Naive thymus-derived CD4-positive, alpha-beta T cell (primary cell): ENCODE measurements at regions of chr1 and their contacts with region 1.

Region 1: DNA sequence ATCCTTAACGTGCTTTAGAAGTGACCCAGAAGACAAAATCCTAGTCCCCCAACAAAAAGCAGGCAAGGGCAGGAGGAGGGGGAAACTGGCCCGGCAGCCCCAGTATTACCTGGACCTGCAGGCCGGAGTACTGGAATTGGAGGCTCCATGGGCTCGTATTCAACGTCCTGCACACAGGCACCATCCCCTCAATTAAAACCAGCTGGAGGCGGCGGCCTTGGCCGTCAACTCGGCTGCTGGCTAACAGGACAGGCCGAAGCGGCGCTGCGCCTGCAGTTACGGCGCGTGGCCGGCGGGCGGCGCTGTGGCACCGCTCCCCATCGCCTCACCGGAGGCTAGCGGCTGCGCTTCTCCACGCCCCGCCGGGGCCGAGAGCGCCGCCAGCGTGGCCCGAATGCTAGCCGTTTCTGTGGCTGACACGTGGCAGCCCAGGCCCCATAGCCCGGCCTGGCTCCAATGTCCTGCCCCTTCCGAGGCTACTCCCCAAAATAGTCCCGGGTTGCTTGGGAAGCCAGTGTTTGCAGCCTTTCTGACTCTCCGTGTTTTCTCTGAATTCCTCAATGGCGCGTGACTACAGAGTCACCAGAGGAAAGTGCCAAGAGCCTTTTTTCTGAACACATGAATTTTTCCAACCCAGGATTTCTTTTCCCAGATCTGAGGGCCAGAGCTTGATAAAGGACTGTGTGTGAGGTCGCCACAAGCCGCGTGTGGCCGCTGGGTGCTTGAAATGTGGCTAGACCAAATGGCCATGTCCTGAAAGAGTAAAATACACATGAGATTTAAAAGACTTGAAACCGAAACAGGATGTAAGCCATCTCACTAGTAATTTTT is 82.5 kb downstream of the HHIPL2 start:
- DNase-seq: peak; percentile 57 to 89 (median 84)
- ATAC-seq: peak; percentile 99
- H3K4me3 ChIP-seq: peak overlapping the region; percentile 86
- H3K4me3 Mint-ChIP-seq: peak overlapping the region; percentile 79 to 92 (median 86)
- H3K27ac ChIP-seq: peak overlapping the region; percentile 64
- H3K27ac Mint-ChIP-seq: peak overlapping the region; percentile 80 to 96 (median 90)
- H3K4me1 ChIP-seq: peaks cover 5 to 6% of the 10 kb centered on the region in 2 donors
- H3K4me1 Mint-ChIP-seq: peaks cover 11 to 25% (median 13%) of the 10 kb centered on the region in 7 donors
- H3K27me3 ChIP-seq: no peaks in the 10 kb centered on the region
- H3K27me3 Mint-ChIP-seq: peaks cover 0 to 18% (median 0%) of the 10 kb centered on the region in 5 donors

Region 2: GRCh38 chr1:222347627-222348026 is 117.8 kb before region 1 on chr1:
- CTCF ChIA-PET with region 1: no interaction called
- POLR2A ChIA-PET with region 1: no interaction called
- intact Hi-C with region 1: no loop called
- DNase-seq: no peak
- ATAC-seq: no peak
- H3K4me3 ChIP-seq: no peak overlapping the region
- H3K4me3 Mint-ChIP-seq: no peak overlapping the region
- H3K27ac ChIP-seq: no peak overlapping the region
- H3K27ac Mint-ChIP-seq: no peak overlapping the region
- H3K4me1 ChIP-seq: no peaks in the 10 kb centered on the region
- H3K4me1 Mint-ChIP-seq: peaks cover 0 to 7% (median 0%) of the 10 kb centered on the region in 7 donors
- H3K27me3 ChIP-seq: no peaks in the 10 kb centered on the region
- H3K27me3 Mint-ChIP-seq: peaks cover 0 to 6% (median 0%) of the 10 kb centered on the region in 5 donors

Region 3: GRCh38 chr1:222387007-222387814 is 78.2 kb before region 1 on chr1:
- CTCF ChIA-PET with region 1: no interaction called
- POLR2A ChIA-PET with region 1: no interaction called
- intact Hi-C with region 1: no loop called
- DNase-seq: no peak
- ATAC-seq: no peak
- H3K4me3 ChIP-seq: no peak overlapping the region
- H3K4me3 Mint-ChIP-seq: no peak overlapping the region
- H3K27ac ChIP-seq: no peak overlapping the region
- H3K27ac Mint-ChIP-seq: peak overlapping the region in 1 of 9 donors; percentile 51
- H3K4me1 ChIP-seq: peaks cover 0 to 6% of the 10 kb centered on the region in 2 donors
- H3K4me1 Mint-ChIP-seq: peaks cover 0 to 46% (median 31%) of the 10 kb centered on the region in 7 donors
- H3K27me3 ChIP-seq: no peaks in the 10 kb centered on the region
- H3K27me3 Mint-ChIP-seq: peaks cover 0 to 8% (median 0%) of the 10 kb centered on the region in 5 donors

Region 4: DNA sequence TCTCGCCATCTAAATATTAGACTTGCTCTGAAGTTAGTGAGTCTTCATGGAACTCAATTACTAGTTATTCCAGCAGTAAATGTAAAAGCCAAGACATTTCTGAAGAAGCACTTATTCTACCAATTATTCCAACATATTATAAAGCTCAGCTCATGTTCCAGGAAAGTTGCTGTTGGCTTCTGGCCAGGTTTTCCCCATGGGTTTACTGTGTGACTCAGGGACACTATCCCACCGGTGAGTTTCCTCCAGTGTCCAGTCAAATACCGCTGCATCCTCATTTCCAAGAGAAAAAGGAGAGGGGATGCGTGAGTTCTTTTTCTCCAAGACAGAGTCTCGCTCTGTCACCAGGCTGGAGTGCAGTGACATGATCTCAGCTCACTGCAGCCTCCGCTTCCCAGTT is 91.7 kb after region 1 on chr1:
- CTCF ChIA-PET with region 1: no interaction called
- POLR2A ChIA-PET with region 1: no interaction called
- intact Hi-C with region 1: no loop called
- DNase-seq: no peak
- ATAC-seq: no peak
- H3K4me3 ChIP-seq: no peak overlapping the region
- H3K4me3 Mint-ChIP-seq: no peak overlapping the region
- H3K27ac ChIP-seq: no peak overlapping the region
- H3K27ac Mint-ChIP-seq: no peak overlapping the region
- H3K4me1 ChIP-seq: no peaks in the 10 kb centered on the region
- H3K4me1 Mint-ChIP-seq: no peaks in the 10 kb centered on the region
- H3K27me3 ChIP-seq: no peaks in the 10 kb centered on the region
- H3K27me3 Mint-ChIP-seq: no peaks in the 10 kb centered on the region

Region 5: GRCh38 chr1:222634180-222635013 is 169.0 kb after region 1 on chr1:
- CTCF ChIA-PET with region 1: interaction called, 28 read pairs
- POLR2A ChIA-PET with region 1: interaction called, 12 read pairs
- intact Hi-C with region 1: loop called (anchors 1 kb)
- DNase-seq: peak in 8 of 9 donors; percentile 43 to 83 (median 78)
- ATAC-seq: peak; percentile 96
- H3K4me3 ChIP-seq: no peak overlapping the region
- H3K4me3 Mint-ChIP-seq: no peak overlapping the region
- H3K27ac ChIP-seq: no peak overlapping the region
- H3K27ac Mint-ChIP-seq: peak overlapping the region in 6 of 9 donors; percentile 11 to 82 (median 58)
- H3K4me1 ChIP-seq: no peaks in the 10 kb centered on the region
- H3K4me1 Mint-ChIP-seq: peaks cover 7 to 20% (median 11%) of the 10 kb centered on the region in 7 donors
- H3K27me3 ChIP-seq: no peaks in the 10 kb centered on the region
- H3K27me3 Mint-ChIP-seq: no peaks in the 10 kb centered on the region

Region 6: DNA sequence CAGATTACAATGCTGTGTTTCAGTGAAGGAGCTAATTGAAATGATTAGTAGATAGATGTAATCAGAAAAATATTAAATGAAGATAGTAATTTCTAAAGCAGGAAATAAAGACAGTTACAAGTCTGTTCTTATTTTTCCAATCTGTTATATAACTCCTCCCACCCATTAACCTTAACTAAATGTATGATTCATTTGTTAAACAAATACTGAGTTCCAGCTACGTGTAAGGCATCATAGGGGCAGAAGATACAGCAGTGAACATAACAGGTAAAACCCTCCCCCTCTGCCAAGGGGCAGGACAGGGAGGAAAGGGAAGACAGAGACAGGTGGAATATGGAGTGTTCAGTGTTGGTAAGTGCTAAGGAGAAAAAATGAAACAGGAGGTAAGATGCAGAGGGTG is 271.5 kb after region 1 on chr1 and contains the start of gene FAM177B:
- CTCF ChIA-PET with region 1: interaction called, 3 read pairs
- POLR2A ChIA-PET with region 1: no interaction called
- intact Hi-C with region 1: loop called in 1 of 2 experiments (anchors 5 kb)
- DNase-seq: no peak
- ATAC-seq: no peak
- H3K4me3 ChIP-seq: no peak within 1 kb of the TSS
- H3K4me3 Mint-ChIP-seq: no peak within 1 kb of the TSS
- H3K27ac ChIP-seq: no peak within 1 kb of the TSS
- H3K27ac Mint-ChIP-seq: no peak within 1 kb of the TSS
- H3K4me1 ChIP-seq: no peaks in the 10 kb centered on the region
- H3K4me1 Mint-ChIP-seq: peaks cover 0 to 7% (median 0%) of the 10 kb centered on the region in 7 donors
- H3K27me3 ChIP-seq: no peaks in the 10 kb centered on the region
- H3K27me3 Mint-ChIP-seq: no peaks in the 10 kb centered on the region
- total RNA-seq, gene FAM177B: not detected

Region 7: DNA sequence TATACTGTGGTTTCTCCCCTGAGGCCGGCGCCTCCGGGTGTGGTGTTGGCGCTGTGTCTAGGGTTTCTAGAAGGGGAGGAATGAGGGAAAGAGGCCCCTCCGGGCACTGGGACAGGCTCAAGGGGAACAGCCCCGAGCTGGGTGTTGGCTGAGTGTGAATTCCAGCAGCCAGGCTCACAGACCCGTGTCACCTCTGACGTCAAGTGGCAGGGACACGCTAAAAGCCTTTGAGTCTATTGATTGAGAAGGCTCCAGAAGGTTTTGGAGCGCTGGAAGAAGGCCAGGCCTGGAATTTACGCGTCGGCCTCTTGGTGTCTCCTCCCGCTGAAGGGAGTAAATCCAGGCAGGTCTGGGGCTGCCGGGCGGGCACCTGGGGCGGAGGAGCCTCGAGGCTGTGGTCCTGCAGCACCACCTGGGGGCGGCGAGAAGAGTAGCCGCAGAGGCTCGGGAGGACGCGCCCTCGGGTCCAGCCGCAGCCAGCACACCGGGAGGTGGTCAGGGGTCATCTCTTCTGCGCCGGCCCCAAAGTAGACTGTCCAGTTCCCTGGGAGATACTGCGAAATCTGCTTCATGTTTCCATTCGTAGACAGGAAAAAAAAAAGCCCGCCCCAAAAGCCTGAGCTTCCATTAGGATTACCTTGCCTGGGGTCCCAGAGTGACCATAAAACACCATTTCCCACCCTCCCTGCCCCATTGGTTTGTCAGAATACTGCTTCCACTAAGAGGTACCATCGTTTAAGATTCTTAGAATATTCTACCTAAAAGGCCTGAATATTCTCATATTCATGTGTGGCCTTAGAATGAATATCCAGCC is 616.0 kb after region 1 on chr1:
- CTCF ChIA-PET with region 1: interaction called, 3 read pairs
- POLR2A ChIA-PET with region 1: no interaction called
- intact Hi-C with region 1: loop called (anchors 1 kb)
- DNase-seq: peak; percentile 54 to 79 (median 65)
- ATAC-seq: peak; percentile 90
- H3K4me3 ChIP-seq: peak overlapping the region; percentile 57
- H3K4me3 Mint-ChIP-seq: peak overlapping the region; percentile 34 to 77 (median 58)
- H3K27ac ChIP-seq: peak overlapping the region; percentile 39
- H3K27ac Mint-ChIP-seq: peak overlapping the region in 1 of 9 donors; percentile 51
- H3K4me1 ChIP-seq: no peaks in the 10 kb centered on the region
- H3K4me1 Mint-ChIP-seq: no peaks in the 10 kb centered on the region
- H3K27me3 ChIP-seq: no peaks in the 10 kb centered on the region
- H3K27me3 Mint-ChIP-seq: peaks cover 2 to 9% (median 4%) of the 10 kb centered on the region in 5 donors